Dorsolateral prefrontal cortex (tissue), 120 donors: ENCODE measurements at regions of chr11 and their contacts with region 1.

Region 1: DNA sequence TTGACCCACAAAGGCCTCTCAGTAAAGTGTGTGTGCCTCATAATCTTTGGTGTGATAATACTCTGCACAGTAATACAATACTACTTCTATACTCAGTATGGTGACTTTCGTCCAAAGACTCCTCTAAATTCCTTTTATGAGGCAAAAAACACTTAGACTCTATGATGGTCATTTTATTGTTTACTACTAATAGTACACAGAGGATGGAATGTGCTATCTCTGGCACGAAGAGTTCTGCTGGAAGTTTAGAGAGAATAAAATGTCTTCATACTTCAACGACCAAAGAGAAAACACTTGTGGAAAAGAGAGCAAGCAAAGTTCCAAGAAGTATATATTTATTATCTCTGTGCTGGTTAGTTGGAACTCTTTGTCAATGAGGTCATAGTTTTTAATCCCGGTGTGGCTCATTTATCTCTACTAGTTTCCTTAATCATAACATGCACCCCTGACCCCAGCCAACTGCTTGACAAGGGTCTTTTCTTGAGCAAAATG is 7.5 kb upstream of the CSTF3 start:
- DNase-seq: no peak
- H3K4me3 ChIP-seq: no peak overlapping the region
- H3K27ac ChIP-seq: no peak overlapping the region
- H3K27me3 ChIP-seq: no peaks in the 10 kb centered on the region
- CTCF ChIP-seq: no peak

Region 2: DNA sequence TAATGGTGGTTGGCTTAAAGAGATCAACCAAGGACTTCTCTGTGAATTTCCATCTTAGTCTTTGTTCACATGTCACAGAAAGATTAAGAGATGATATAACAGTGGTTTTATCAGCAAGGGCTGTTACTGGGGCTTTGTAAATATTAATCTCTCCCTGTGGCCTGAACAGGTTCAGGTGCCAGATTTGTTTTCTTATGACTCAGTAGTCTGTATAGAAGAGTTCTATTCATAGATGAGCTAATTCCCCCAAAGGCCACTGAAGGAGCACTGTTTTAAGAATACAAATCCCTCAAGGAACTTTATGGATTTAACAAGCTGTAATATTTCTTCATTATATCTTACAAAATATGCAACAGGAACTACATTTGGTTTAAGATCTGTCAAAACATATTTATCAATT is 79.0 kb before region 1 on chr11:
- intact Hi-C with region 1: no loop called
- DNase-seq: no peak
- H3K4me3 ChIP-seq: no peak overlapping the region
- H3K27ac ChIP-seq: no peak overlapping the region
- H3K27me3 ChIP-seq: no peaks in the 10 kb centered on the region
- CTCF ChIP-seq: no peak

Region 3: DNA sequence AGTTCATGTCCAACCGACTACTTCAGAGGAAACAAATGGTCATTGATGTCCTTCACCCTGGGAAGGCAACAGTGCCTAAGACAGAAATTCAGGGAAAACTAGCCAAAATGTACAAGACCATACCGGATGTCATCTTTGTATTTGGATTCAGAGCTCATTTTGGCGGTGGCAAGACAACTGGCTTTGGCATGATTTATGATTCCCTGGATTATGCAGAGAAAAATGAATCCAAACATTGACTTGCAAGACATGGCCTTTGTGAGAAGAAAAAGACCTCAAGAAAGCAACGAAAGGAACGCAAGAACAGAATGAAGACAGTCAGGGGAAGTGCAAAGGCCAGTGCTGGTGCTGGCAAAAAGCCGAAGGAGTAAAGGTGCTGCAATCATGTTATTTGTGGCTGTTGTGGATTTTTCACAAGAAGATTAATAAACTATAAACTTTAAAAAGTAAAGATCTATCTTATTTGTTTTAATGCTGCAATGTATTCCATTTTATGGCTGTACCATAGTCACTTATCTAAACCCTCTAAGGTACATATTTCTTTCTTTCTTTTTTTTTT is 68.4 kb after region 1 on chr11:
- intact Hi-C with region 1: no loop called
- DNase-seq: no peak
- H3K4me3 ChIP-seq: no peak overlapping the region
- H3K27ac ChIP-seq: no peak overlapping the region
- H3K27me3 ChIP-seq: no peaks in the 10 kb centered on the region
- CTCF ChIP-seq: no peak

Region 4: DNA sequence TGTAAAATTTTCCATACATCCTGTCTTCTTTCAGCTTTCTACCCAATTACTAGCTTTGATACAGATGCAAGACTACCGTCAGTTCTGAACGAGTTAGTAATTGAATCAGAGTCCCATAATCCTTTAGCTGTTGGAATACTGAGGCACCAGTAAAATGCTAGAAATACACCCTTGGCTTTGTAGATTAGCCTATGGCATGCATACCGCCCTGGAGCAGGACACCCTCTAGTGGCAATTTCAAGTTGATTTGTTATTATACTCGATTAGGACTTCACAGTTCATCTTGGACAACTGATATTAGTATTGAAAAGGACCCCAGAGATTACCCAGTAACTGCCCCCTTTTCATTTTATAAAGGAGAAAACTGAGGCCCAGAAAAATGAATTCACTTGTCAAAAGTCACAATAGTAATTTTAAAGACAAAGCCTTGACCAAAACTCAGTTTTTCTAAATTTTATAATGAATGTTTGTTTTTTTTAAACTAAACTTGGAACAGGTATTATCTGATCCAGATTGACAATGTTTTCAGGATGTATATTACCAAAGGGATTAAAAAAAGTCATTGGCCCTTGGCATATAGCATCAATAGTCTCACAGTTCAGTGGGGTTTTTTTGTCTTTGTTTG is 161.1 kb after region 1 on chr11:
- intact Hi-C with region 1: loop called in 1 of 2 experiments (anchors 5 kb)
- DNase-seq: peak in 5 of 10 donors; percentile 20 to 63 (median 41)
- H3K4me3 ChIP-seq: no peak overlapping the region
- H3K27ac ChIP-seq: peak overlapping the region in 4 of 59 donors; percentile 1 to 15 (median 8)
- H3K27me3 ChIP-seq: no peaks in the 10 kb centered on the region
- CTCF ChIP-seq: peak in 55 of 56 donors; percentile 41 to 82 (median 68)

Region 5: GRCh38 chr11:33700425-33701271 is 531.9 kb after region 1 on chr11 and contains the start of gene C11orf91:
- intact Hi-C with region 1: loop called in 1 of 2 experiments (anchors 5 kb)
- DNase-seq: peak; percentile 81 to 98 (median 92)
- H3K4me3 ChIP-seq: peak within 1 kb of the TSS; percentile 51 to 83 (median 71)
- H3K27ac ChIP-seq: peak within 1 kb of the TSS; percentile 7 to 90 (median 79)
- H3K27me3 ChIP-seq: no peaks in the 10 kb centered on the region
- CTCF ChIP-seq: peak in 11 of 56 donors; percentile 5 to 33 (median 14)
- total RNA-seq, gene C11orf91: 0.50 to 1.8 (median 0.85) TPM in 26 of 120 experiments, not detected in the others